Activated CD4-positive, alpha-beta memory T cell treated with anti-CD3 and anti-CD28 coated beads for 36 hours (primary cell): ENCODE measurements at regions of chr2 and their contacts with region 1.

Region 1: GRCh38 chr2:27683390-27684071 is 19.8 kb downstream of the SLC4A1AP start:
- DNase-seq: peak; percentile 90
- H3K4me3 Mint-ChIP-seq: no peak overlapping the region
- H3K27ac Mint-ChIP-seq: peak overlapping the region; percentile 76
- H3K4me1 Mint-ChIP-seq: peaks cover 41% of the 10 kb centered on the region
- H3K27me3 Mint-ChIP-seq: no peaks in the 10 kb centered on the region

Region 2: DNA sequence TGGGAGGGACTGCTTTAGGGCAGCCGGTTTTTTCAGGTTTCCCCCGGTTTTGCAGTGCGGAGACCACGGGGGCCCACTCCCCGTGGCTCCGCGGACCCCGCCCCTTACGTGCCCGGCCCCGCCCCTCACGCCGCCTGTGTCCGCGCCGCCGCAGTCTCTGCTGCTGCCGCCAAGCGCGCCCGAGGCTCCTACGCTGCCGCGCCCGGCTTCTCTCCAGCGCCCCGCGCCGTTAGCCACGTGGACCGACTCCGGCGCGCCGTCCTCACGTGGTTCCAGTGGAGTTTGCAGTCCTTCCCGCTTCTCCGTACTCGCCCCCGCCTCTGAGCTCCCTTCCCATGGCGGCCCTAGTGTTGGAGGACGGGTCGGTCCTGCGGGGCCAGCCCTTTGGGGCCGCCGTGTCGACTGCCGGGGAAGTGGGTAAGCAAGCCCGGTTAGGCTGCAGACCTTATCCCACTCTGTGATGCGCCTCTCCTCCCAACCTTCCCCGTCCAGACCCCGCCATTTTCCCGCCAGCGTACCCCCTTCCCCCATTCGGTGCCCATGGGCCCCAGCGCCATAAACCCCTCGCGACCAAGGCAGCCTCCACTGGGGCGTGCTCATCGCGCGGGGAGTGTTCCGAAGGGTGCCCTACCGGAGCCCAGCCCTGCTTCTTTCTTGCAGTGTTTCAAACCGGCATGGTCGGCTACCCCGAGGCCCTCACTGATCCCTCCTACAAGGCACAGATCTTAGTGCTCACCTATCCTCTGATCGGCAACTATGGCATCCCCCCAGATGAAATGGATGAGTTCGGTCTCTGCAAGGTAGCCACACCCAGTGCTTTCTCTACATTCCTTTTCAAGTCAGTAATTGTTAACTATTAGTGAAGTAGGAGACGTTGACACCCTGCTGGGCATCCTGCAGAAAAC is 466.1 kb before region 1 on chr2 and contains the start of gene CAD:
- CTCF ChIA-PET with region 1: no interaction called
- POLR2A ChIA-PET with region 1: no interaction called
- intact Hi-C with region 1: loop called (anchors 10 kb)
- DNase-seq: peak; percentile 91
- H3K4me3 Mint-ChIP-seq: peak within 1 kb of the TSS; percentile 93
- H3K27ac Mint-ChIP-seq: peak within 1 kb of the TSS; percentile 89
- H3K4me1 Mint-ChIP-seq: peaks cover 47% of the 10 kb centered on the region
- H3K27me3 Mint-ChIP-seq: no peaks in the 10 kb centered on the region
- total RNA-seq, gene CAD: 99.7 to 102 TPM

Region 3: DNA sequence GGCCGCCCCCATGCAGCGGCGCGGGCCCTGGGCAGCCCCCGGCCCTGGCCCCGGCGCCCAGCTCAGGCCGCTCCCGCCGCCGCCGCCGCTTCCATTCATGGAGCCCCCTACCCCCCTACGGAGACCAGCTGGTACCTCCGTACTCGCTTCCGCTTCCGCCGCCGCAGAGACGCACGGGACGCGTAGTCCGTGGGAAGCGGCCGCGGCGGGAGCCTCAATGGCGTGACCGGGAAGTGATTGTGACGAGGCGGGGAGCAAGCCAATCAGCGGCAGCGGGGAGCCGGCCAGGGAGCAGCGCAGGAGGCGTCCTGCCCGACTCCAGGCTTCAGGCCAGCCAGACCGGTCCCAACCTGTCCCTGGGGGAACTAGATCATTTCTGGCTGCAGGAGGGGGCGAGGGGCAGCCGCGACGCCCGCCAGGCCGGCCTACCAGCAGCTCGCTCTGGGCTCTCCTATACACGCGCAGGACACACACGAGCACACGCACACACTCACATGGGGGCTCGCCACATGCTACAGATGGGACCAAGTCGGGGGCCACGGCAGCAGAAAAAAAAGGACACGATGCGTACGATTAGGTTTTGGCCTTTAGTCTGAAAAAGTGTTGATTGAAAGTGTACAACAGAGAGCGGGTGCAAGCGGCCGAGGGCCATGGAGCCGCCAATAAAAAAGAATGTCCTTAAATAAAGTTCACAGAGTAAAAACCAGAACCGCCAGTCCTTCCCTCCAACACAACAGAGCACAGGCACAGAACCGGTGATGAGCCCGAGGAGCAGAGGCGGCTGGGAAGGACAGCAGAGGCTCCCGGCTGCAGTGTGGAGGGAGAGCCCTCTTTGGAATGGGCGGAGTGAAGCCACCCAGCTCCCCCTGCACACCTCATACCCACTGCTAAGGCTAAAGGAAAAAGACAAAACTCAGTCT is 302.6 kb before region 1 on chr2 and contains the start of gene ZNF513:
- CTCF ChIA-PET with region 1: interaction called, 15 read pairs
- POLR2A ChIA-PET with region 1: no interaction called
- intact Hi-C with region 1: no loop called
- DNase-seq: peak; percentile 94
- H3K4me3 Mint-ChIP-seq: peak within 1 kb of the TSS; percentile 90
- H3K27ac Mint-ChIP-seq: peak within 1 kb of the TSS; percentile 80
- H3K4me1 Mint-ChIP-seq: peaks cover 22% of the 10 kb centered on the region
- H3K27me3 Mint-ChIP-seq: no peaks in the 10 kb centered on the region
- total RNA-seq, gene ZNF513: 8.6 to 9.7 TPM

Region 4: DNA sequence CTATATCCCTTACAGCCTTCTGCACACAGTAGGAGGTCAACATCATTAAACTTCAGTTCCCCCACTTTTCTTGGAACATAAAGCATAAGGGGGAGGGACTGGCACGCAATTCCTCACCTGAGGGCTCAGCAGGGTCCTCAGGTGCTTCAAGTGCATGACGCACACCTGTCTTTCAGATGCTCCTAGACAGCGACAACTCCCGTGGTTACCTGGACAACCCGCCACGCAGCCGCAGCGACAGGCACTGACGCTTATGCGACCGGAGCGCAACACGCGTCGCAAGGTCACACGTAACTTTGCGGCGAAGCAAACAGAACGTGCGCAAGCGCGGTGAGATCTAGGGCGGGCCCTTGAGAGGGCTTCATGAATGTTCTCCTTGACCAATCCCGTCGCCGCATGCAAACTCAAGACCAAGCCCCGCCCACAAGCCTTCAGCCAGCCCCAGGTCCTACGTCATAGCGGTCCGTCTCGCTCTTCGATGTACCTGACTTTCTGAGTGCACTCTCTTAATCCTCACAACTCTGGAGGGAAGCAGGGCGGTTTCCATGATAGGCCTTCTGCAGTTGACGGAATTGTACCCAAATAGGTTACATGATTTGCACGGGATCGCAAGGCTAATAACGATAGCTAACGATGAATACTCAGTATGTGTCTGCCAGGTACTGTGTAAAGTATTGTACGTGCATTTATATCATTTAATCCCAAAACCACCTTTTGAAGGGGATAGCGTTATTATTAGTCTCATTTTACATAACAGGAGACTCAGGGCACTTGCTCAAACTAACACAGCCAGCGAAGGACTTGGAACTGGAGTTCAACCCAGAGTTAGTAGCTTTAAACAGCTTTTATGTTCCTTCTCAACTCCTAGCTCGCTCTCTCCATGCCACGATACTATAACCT is 193.8 kb before region 1 on chr2 and contains the start of gene IFT172:
- CTCF ChIA-PET with region 1: interaction called, 4 read pairs
- POLR2A ChIA-PET with region 1: no interaction called
- intact Hi-C with region 1: loop called (anchors 1 kb)
- DNase-seq: peak; percentile 100
- H3K4me3 Mint-ChIP-seq: peak within 1 kb of the TSS; percentile 88
- H3K27ac Mint-ChIP-seq: peak within 1 kb of the TSS; percentile 76
- H3K4me1 Mint-ChIP-seq: peaks cover 31% of the 10 kb centered on the region
- H3K27me3 Mint-ChIP-seq: peaks cover 14% of the 10 kb centered on the region
- total RNA-seq, gene IFT172: 7.7 to 8.2 TPM

Region 5: GRCh38 chr2:27653397-27653796 is 30.1 kb before region 1 on chr2:
- CTCF ChIA-PET with region 1: interaction called, 22 read pairs
- POLR2A ChIA-PET with region 1: interaction called, 3 read pairs
- intact Hi-C with region 1: no loop called
- DNase-seq: no peak
- H3K4me3 Mint-ChIP-seq: no peak overlapping the region
- H3K27ac Mint-ChIP-seq: peak overlapping the region; percentile 23
- H3K4me1 Mint-ChIP-seq: peaks cover 30% of the 10 kb centered on the region
- H3K27me3 Mint-ChIP-seq: no peaks in the 10 kb centered on the region

Region 6: DNA sequence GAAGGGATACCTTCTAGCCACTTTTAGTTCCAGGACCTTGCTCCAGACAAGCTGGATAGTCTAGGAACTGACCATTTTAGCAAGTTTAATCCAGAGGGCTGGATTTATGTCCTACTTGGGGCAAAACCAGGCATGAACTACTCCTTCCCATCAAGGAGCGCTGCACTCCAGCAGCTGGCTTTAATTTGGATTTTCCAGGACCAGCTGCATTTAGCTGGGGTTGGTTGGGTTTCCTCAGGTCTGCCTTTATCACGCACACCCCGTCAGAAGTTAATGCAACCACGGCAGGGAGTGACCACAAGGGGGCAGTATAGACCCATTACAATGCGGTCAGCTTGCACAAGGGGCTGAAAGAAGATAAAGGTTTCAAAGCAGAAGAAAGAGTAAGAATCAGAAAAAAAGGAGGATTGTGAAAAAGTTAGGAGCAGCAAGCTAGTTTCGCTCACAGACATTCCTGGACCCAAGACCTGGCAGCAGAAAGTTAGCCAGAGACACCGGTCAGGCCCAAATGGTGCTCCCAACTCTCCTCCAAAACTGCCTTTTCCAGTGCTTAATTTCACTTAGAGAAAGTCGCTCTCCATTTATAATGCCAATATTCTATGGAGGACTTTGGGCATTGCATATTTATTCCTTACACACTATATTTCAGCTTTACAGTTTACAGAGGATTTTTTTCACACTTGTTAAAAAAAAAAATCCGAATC is 20.3 kb after region 1 on chr2:
- CTCF ChIA-PET with region 1: interaction called, 40 read pairs
- POLR2A ChIA-PET with region 1: interaction called, 8 read pairs
- intact Hi-C with region 1: no loop called
- DNase-seq: peak; percentile 92
- H3K4me3 Mint-ChIP-seq: no peak overlapping the region
- H3K27ac Mint-ChIP-seq: peak overlapping the region; percentile 10
- H3K4me1 Mint-ChIP-seq: peaks cover 26% of the 10 kb centered on the region
- H3K27me3 Mint-ChIP-seq: no peaks in the 10 kb centered on the region

Region 7: GRCh38 chr2:27942612-27943547 is 259.3 kb after region 1 on chr2:
- CTCF ChIA-PET with region 1: no interaction called
- POLR2A ChIA-PET with region 1: no interaction called
- intact Hi-C with region 1: no loop called
- DNase-seq: no peak
- H3K4me3 Mint-ChIP-seq: no peak overlapping the region
- H3K27ac Mint-ChIP-seq: no peak overlapping the region
- H3K4me1 Mint-ChIP-seq: peaks cover 14% of the 10 kb centered on the region
- H3K27me3 Mint-ChIP-seq: no peaks in the 10 kb centered on the region

Region 8: GRCh38 chr2:28068088-28068487 is 384.6 kb after region 1 on chr2:
- CTCF ChIA-PET with region 1: no interaction called
- POLR2A ChIA-PET with region 1: no interaction called
- intact Hi-C with region 1: no loop called
- DNase-seq: no peak
- H3K4me3 Mint-ChIP-seq: no peak overlapping the region
- H3K27ac Mint-ChIP-seq: no peak overlapping the region
- H3K4me1 Mint-ChIP-seq: peaks cover 11% of the 10 kb centered on the region
- H3K27me3 Mint-ChIP-seq: no peaks in the 10 kb centered on the region